Activated B cell treated with CpG ODN at 0.5 μM for 24 hours (primary cell): ENCODE measurements at regions of chr2 and their contacts with region 1.

Region 1: DNA sequence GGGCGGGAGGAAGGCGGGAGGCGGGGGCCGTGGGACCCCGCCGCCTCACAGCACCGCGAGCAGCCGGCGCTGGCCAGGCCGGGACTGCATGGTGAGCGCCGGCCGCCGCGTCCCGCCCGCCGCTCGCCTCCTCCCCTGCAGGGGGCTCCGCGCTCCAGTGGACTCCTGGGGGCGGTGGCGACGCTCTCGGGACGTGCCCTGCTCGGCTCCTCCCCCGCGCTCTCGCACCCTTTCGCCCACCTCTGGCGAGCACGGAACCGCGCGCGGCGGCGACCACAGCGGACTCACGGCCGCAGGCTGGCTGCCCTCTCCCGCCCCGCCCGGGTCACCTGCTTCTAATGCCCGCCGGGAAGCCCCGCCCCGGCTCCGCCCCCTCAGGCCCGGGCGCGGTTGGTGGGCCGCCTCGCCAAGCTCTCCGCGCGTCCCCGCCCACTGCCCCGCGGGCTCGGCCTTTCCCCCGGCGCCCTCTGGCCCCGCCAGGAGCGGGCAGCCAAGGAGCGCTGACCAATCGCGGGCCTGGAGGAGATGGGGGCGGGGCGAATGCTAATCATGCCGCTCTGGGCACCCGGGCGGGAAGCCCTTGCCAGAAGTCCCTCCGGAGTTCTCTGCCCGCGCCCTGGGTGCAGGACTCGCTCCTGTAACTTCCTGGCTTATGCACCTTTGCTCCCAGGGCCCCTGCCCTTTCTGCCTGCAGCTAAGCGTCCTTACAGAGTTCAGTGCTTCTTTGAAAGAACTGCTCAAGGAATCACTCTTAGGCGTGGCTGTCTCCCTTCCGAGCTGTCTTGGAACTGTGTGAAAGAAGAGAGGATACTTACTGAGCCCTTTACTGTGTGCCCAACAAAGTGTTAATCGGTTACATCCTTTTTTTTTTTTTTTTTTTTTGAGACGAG is at the start of gene FZD5:
- DNase-seq: peak; percentile 93
- ATAC-seq: peak; percentile 91
- H3K4me3 Mint-ChIP-seq: peak within 1 kb of the TSS; percentile 87
- H3K27ac Mint-ChIP-seq: no peak within 1 kb of the TSS
- H3K4me1 Mint-ChIP-seq: peaks cover 36% of the 10 kb centered on the region
- H3K27me3 Mint-ChIP-seq: peaks cover 7% of the 10 kb centered on the region
- CTCF ChIP-seq: no peak
- total RNA-seq, gene FZD5: 0.66 and 0.89 TPM in 2 replicates

Region 2: DNA sequence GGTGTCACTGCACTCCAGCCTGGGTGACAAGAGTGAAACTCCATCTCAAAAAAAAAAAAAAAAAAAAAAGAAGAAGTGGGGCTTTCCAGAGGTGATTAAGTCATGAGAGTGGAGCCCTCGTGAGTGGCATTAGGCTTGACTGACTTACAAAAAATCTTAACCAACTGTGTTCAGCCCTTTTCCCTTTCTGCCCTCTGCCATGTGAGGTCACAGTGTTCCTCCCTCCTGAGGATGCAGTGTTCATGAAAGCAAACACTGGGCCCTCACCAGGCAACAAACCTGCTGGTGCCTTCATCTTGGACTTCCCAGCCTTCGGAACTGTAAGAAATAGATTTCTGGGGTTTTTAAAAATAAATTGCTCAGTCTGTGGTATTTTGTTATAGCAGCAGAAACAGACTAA is 107.6 kb before region 1 on chr2:
- CTCF ChIA-PET with region 1: no interaction called
- POLR2A ChIA-PET with region 1: no interaction called
- intact Hi-C with region 1: loop called (anchors 2 kb)
- DNase-seq: peak; percentile 33
- ATAC-seq: peak; percentile 97
- H3K4me3 Mint-ChIP-seq: peak overlapping the region; percentile 78
- H3K27ac Mint-ChIP-seq: peak overlapping the region; percentile 97
- H3K4me1 Mint-ChIP-seq: peaks cover 59% of the 10 kb centered on the region
- H3K27me3 Mint-ChIP-seq: no peaks in the 10 kb centered on the region
- CTCF ChIP-seq: no peak

Region 3: DNA sequence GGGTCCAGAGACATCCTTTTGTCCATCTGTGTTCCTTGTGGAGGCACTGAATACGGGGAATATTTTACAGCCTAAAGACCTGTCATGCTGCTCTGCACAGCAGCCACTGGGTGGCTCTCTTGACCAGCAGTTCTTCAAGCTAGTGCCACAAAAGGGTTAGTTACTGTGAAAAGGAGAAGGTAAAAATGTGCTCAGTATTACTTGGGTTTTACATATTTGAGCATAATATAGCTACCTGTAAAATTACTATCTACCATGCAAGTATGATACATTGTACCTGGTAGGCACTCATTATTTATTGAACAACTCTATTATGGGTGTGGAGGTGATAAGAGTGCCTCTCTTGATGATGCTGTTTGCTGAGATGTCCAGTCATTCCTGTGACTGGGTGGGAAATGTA is 23.7 kb before region 1 on chr2:
- CTCF ChIA-PET with region 1: interaction called, 4 read pairs
- POLR2A ChIA-PET with region 1: no interaction called
- intact Hi-C with region 1: loop called (anchors 1 kb)
- DNase-seq: peak; percentile 22
- ATAC-seq: peak; percentile 95
- H3K4me3 Mint-ChIP-seq: no peak overlapping the region
- H3K27ac Mint-ChIP-seq: no peak overlapping the region
- H3K4me1 Mint-ChIP-seq: no peaks in the 10 kb centered on the region
- H3K27me3 Mint-ChIP-seq: no peaks in the 10 kb centered on the region
- CTCF ChIP-seq: peak; percentile 46

Region 4: GRCh38 chr2:207758025-207758424 is 11.8 kb before region 1 on chr2:
- CTCF ChIA-PET with region 1: no interaction called
- POLR2A ChIA-PET with region 1: no interaction called
- intact Hi-C with region 1: no loop called
- DNase-seq: no peak
- ATAC-seq: no peak
- H3K4me3 Mint-ChIP-seq: no peak overlapping the region
- H3K27ac Mint-ChIP-seq: no peak overlapping the region
- H3K4me1 Mint-ChIP-seq: peaks cover 7% of the 10 kb centered on the region
- H3K27me3 Mint-ChIP-seq: no peaks in the 10 kb centered on the region
- CTCF ChIP-seq: no peak

Region 5: GRCh38 chr2:207854484-207855440 is 84.9 kb after region 1 on chr2:
- CTCF ChIA-PET with region 1: no interaction called
- POLR2A ChIA-PET with region 1: no interaction called
- intact Hi-C with region 1: no loop called
- DNase-seq: no peak
- ATAC-seq: no peak
- H3K4me3 Mint-ChIP-seq: no peak overlapping the region
- H3K27ac Mint-ChIP-seq: no peak overlapping the region
- H3K4me1 Mint-ChIP-seq: no peaks in the 10 kb centered on the region
- H3K27me3 Mint-ChIP-seq: no peaks in the 10 kb centered on the region
- CTCF ChIP-seq: no peak

Region 6: GRCh38 chr2:208025037-208025813 is 255.4 kb after region 1 on chr2 and contains the start of gene PLEKHM3:
- CTCF ChIA-PET with region 1: no interaction called
- POLR2A ChIA-PET with region 1: interaction called, 9 read pairs
- intact Hi-C with region 1: loop called (anchors 2 kb)
- DNase-seq: peak; percentile 76
- ATAC-seq: peak; percentile 91
- H3K4me3 Mint-ChIP-seq: peak within 1 kb of the TSS; percentile 86
- H3K27ac Mint-ChIP-seq: peak within 1 kb of the TSS; percentile 92
- H3K4me1 Mint-ChIP-seq: peaks cover 20% of the 10 kb centered on the region
- H3K27me3 Mint-ChIP-seq: no peaks in the 10 kb centered on the region
- CTCF ChIP-seq: no peak
- total RNA-seq, gene PLEKHM3: 12.0 and 12.2 TPM in 2 replicates

Region 7: GRCh38 chr2:208265801-208266552 is 496.1 kb after region 1 on chr2 and contains the start of gene PIKFYVE:
- CTCF ChIA-PET with region 1: no interaction called
- POLR2A ChIA-PET with region 1: no interaction called
- intact Hi-C with region 1: loop called (anchors 2 kb)
- DNase-seq: peak; percentile 85
- ATAC-seq: peak; percentile 87
- H3K4me3 Mint-ChIP-seq: peak within 1 kb of the TSS; percentile 95
- H3K27ac Mint-ChIP-seq: peak within 1 kb of the TSS; percentile 95
- H3K4me1 Mint-ChIP-seq: peaks cover 56% of the 10 kb centered on the region
- H3K27me3 Mint-ChIP-seq: no peaks in the 10 kb centered on the region
- CTCF ChIP-seq: no peak
- total RNA-seq, gene PIKFYVE: 92.2 and 106 TPM in 2 replicates